Right ventricle myocardium superior (tissue), 1 donor: ENCODE measurements at regions of chr3 and their contacts with region 1.

Region 1: GRCh38 chr3:57597122-57597923 is at the start of gene ARF4:
- DNase-seq: peak; percentile 100
- ATAC-seq: peak; percentile 97
- total RNA-seq, gene ARF4: 59.0 TPM

Region 2: GRCh38 chr3:57555738-57556458 is 41.4 kb before region 1 on chr3 and contains the start of gene PDE12:
- intact Hi-C with region 1: loop called (anchors 5 kb)
- DNase-seq: peak; percentile 89
- ATAC-seq: peak; percentile 97
- total RNA-seq, gene PDE12: 9.0 TPM

Region 3: DNA sequence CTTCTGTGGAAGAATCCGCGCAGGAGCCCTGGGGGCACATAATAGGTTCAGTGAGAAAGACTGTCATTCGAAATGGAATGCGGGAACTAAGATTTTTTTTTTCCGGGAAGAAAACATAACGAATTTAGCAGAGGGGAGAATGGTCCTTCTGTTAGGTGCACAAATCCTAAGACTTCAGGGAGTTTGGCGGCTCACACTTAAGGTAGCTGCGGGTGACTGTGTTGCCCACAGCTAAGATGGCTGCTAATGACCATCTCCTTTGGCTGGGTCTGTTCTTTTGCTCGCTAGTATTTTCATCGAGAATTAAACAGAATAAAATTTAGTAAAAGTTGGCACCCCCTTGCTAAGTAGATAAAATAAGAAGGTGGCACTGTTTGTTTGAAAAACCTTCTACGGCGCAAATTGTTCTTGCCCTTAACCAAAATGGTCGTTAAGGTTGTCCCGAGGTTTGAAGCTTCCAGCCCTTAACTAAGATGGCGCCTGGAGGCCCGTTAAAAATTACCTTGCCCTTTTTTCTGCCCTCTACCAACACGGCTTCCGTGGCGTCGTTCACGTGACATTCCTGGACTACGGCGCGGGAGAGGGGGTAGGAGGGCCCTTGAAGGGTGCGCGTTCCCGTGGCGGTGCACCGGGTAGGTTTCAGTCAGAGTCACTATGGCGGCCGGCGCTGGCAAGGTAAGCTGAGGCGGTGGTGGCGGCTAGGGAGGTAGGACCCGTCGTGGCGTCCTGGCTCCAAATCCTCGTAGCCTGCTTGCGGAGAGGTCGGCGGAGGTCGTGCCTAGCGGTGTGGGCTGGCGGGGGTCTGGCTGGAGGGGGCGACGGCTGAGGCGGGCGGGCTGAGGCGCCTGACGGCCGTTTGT is 158.6 kb after region 1 on chr3 and contains the start of gene SLMAP:
- intact Hi-C with region 1: loop called (anchors 5 kb)
- DNase-seq: peak; percentile 98
- ATAC-seq: peak; percentile 99
- total RNA-seq, gene SLMAP: 274 TPM